Activated CD4-positive, alpha-beta memory T cell treated with anti-CD3 and anti-CD28 coated beads for 36 hours (primary cell): ENCODE measurements at regions of chr4 and their contacts with region 1.

Region 1: GRCh38 chr4:94406668-94407437 is 44.9 kb upstream of the PDLIM5 start:
- DNase-seq: peak; percentile 63
- H3K4me3 Mint-ChIP-seq: no peak overlapping the region
- H3K27ac Mint-ChIP-seq: no peak overlapping the region
- H3K4me1 Mint-ChIP-seq: no peaks in the 10 kb centered on the region
- H3K27me3 Mint-ChIP-seq: peaks cover 2% of the 10 kb centered on the region

Region 2: DNA sequence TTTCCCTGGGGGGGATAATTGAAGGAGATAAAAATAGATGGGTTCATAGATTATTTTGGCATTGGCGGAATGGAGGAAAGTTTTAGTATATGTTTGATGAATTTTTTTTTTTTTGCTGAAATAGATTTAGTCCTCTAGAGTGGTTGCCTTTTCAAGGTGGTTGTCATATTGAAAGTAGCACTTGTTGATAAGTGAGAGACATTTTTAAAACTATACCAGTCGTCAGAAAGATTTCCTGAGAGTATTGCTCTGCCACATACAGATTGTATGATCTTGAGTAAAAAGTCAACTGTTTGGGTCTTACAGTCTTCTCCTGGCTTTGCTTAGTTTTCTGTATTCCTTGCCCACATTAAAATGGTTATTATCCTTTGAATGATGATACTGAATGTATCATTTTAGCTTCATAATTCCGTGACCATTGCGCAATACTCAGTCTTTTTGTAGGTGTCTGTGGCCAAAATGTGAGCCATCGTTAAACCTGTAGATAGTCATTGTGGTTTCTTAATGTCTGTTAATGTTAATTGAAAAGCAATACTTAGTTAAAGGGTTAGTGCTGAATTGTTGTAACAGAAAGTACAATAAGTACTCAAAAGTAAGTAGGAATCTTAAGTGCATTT is 192.0 kb before region 1 on chr4:
- CTCF ChIA-PET with region 1: no interaction called
- POLR2A ChIA-PET with region 1: no interaction called
- intact Hi-C with region 1: no loop called
- DNase-seq: no peak
- H3K4me3 Mint-ChIP-seq: no peak overlapping the region
- H3K27ac Mint-ChIP-seq: peak overlapping the region; percentile 84
- H3K4me1 Mint-ChIP-seq: peaks cover 52% of the 10 kb centered on the region
- H3K27me3 Mint-ChIP-seq: no peaks in the 10 kb centered on the region

Region 3: DNA sequence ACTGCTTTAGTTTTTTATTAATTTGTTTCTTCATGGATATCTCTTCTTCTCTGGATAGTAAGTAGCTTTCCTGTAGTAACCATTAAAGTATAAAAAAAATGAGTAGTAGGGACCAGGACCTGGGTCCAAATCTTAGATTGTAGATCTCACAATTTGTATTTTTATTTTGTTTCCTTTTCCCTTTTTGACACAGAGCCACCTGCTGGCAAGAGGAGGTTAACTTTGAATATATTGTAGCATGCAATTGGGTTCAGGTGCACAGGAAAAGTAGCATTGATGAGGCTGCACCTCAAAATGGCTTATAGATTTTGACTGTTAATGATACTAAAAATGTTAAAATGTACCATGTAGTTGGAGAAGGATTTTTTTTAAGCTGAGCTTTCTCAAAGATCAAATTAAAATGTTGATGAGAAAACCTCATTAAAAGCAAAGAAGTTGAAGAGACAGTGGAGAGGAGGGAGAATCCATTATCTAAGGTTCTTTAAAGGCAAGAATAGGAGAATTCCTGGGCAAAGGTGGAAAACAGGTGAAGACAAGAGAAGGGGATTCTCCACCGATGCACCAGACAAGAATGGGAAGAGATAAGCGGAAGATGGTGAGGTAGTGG is 15.9 kb before region 1 on chr4:
- CTCF ChIA-PET with region 1: interaction called, 13 read pairs
- POLR2A ChIA-PET with region 1: no interaction called
- intact Hi-C with region 1: no loop called
- DNase-seq: peak; percentile 12
- H3K4me3 Mint-ChIP-seq: no peak overlapping the region
- H3K27ac Mint-ChIP-seq: no peak overlapping the region
- H3K4me1 Mint-ChIP-seq: no peaks in the 10 kb centered on the region
- H3K27me3 Mint-ChIP-seq: peaks cover 6% of the 10 kb centered on the region

Region 4: GRCh38 chr4:94431388-94431787 is 24.5 kb after region 1 on chr4:
- CTCF ChIA-PET with region 1: interaction called, 18 read pairs
- POLR2A ChIA-PET with region 1: no interaction called
- intact Hi-C with region 1: no loop called
- DNase-seq: no peak
- H3K4me3 Mint-ChIP-seq: no peak overlapping the region
- H3K27ac Mint-ChIP-seq: no peak overlapping the region
- H3K4me1 Mint-ChIP-seq: no peaks in the 10 kb centered on the region
- H3K27me3 Mint-ChIP-seq: peaks cover 5% of the 10 kb centered on the region

Region 5: DNA sequence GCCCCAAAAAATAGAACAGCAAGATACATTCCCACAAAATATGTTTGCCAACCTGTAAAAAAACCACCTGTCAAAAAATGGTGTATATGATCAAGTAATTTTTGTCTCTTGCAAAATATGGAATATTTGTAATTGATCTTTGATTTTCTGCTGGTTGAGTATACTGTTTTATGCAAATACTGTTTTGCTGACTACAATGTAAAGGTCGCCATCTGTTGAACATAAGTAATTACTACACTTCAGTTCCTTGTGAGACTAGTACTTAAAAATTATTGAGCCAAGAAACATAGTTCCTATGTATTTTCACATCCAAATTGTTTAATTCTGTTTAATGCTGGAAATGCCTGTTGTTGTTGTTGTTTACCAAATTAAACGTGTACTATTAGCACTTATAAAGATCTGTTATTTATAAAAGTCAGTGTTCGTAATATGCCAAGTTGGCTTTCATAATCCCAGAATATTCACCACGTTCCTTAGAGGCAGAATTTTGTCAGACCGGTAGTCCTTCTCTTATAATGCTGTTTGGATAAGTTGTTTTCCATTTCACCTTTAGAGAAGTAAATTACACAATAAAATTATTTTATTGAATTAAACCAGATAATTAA is 189.1 kb after region 1 on chr4:
- CTCF ChIA-PET with region 1: interaction called, 16 read pairs
- POLR2A ChIA-PET with region 1: no interaction called
- intact Hi-C with region 1: loop called (anchors 1 kb)
- DNase-seq: no peak
- H3K4me3 Mint-ChIP-seq: no peak overlapping the region
- H3K27ac Mint-ChIP-seq: no peak overlapping the region
- H3K4me1 Mint-ChIP-seq: no peaks in the 10 kb centered on the region
- H3K27me3 Mint-ChIP-seq: no peaks in the 10 kb centered on the region

Region 6: DNA sequence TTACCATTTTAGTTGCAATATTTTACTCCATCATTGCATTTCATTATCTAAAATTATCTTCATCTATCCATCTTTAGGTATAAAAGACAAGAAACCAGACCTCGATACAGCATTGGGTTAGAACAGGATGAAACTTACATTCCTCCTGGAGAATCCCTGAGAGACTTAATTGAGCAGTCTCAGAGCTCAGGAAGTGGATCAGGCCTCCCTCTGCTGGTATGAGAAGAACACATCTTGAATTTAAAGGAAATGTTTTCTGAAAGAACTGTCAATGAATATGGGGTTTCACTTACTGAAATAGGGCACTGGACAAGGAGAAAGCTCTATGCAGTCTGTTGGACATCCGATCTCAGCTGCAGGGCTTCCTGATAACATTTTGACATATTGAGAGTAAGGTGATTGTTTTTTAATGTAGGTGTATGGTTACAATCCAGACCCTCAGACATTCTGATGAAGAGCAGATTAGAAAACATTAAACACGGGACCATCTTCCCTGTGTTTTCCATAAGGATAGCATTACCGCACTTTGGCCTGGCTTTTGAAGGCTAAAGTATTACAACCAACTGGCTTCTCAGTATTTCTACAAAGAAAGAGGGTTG is 718.2 kb after region 1 on chr4:
- CTCF ChIA-PET with region 1: no interaction called
- POLR2A ChIA-PET with region 1: no interaction called
- intact Hi-C with region 1: loop called (anchors 10 kb)
- DNase-seq: no peak
- H3K4me3 Mint-ChIP-seq: no peak overlapping the region
- H3K27ac Mint-ChIP-seq: no peak overlapping the region
- H3K4me1 Mint-ChIP-seq: peaks cover 4% of the 10 kb centered on the region
- H3K27me3 Mint-ChIP-seq: peaks cover 1% of the 10 kb centered on the region

Region 7: GRCh38 chr4:95478679-95479078 is 1071.8 kb after region 1 on chr4:
- CTCF ChIA-PET with region 1: no interaction called
- POLR2A ChIA-PET with region 1: no interaction called
- intact Hi-C with region 1: no loop called
- DNase-seq: no peak
- H3K4me3 Mint-ChIP-seq: no peak overlapping the region
- H3K27ac Mint-ChIP-seq: no peak overlapping the region
- H3K4me1 Mint-ChIP-seq: no peaks in the 10 kb centered on the region
- H3K27me3 Mint-ChIP-seq: no peaks in the 10 kb centered on the region